Spleen (tissue), 13 donors: ENCODE measurements at regions of chr18 and their contacts with region 1.

Region 1: GRCh38 chr18:30163573-30163972 is 879.0 kb downstream of the DSC3 start:
- DNase-seq: no peak
- H3K4me3 ChIP-seq: no peak overlapping the region
- H3K27ac ChIP-seq: no peak overlapping the region
- H3K4me1 ChIP-seq: no peaks in the 10 kb centered on the region
- H3K27me3 ChIP-seq: no peaks in the 10 kb centered on the region
- CTCF ChIP-seq: no peak
- POLR2A ChIP-seq: no peak

Region 2: GRCh38 chr18:29629493-29630042 is 534.0 kb before region 1 on chr18:
- intact Hi-C with region 1: no loop called
- DNase-seq: no peak
- H3K4me3 ChIP-seq: no peak overlapping the region
- H3K27ac ChIP-seq: no peak overlapping the region
- H3K4me1 ChIP-seq: no peaks in the 10 kb centered on the region
- H3K27me3 ChIP-seq: no peaks in the 10 kb centered on the region
- CTCF ChIP-seq: no peak
- POLR2A ChIP-seq: no peak

Region 3: DNA sequence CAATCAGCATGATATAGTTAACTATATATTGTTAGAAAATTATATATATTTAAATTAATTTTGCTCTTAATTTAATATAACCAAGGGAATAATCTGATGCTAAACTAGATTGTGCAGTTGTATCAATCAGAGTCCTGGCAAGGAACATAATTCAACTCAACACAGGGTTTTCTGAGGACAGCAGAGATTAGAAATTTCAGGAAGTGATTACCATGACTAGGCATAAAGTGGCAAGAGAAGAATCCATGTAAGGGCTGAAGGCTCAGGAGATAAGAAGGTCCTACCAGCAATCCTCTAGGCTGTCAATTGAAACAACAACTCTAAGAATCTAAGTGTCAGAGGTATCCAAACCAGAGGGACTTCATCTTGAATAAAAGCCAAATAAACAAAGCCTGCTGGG is 71.2 kb after region 1 on chr18:
- intact Hi-C with region 1: loop called (anchors 10 kb)
- DNase-seq: no peak
- H3K4me3 ChIP-seq: no peak overlapping the region
- H3K27ac ChIP-seq: no peak overlapping the region
- H3K4me1 ChIP-seq: no peaks in the 10 kb centered on the region
- H3K27me3 ChIP-seq: no peaks in the 10 kb centered on the region
- CTCF ChIP-seq: no peak
- POLR2A ChIP-seq: no peak

Region 4: DNA sequence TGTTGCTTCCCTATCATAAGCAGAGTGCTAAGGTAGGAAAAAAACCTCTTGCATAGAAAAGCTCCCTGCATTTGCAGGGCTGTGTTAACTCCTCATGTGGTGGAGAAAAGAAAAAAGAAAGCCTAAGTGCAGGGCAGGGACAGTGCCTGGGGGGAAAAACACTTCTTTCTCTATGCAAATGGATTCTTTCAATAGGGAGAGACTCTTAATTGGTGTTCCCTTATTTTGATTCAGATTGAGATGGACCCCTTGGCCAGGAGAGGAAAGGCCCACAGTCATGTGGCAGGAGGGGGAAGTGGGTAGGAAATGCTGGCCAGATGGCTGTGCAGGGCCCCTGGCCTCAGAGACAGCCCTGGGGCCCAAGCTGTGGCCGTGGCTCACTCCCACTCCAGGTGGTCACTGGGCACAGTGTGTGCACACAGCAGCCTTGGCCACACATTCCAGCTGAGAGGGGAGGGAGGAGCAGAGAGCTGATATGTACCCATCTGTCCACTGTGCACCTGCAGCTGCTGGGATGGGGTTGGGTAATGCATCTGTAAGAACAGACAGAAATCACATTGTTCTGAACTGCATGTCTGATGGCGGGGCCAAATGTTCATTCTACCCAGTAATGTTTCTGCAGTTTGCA is 468.6 kb after region 1 on chr18:
- intact Hi-C with region 1: no loop called
- DNase-seq: no peak
- H3K4me3 ChIP-seq: no peak overlapping the region
- H3K27ac ChIP-seq: no peak overlapping the region
- H3K4me1 ChIP-seq: no peaks in the 10 kb centered on the region
- H3K27me3 ChIP-seq: no peaks in the 10 kb centered on the region
- CTCF ChIP-seq: no peak
- POLR2A ChIP-seq: no peak